ENCODE measurements at regions of chr10 and their contacts with region 1.

Region 1: DNA sequence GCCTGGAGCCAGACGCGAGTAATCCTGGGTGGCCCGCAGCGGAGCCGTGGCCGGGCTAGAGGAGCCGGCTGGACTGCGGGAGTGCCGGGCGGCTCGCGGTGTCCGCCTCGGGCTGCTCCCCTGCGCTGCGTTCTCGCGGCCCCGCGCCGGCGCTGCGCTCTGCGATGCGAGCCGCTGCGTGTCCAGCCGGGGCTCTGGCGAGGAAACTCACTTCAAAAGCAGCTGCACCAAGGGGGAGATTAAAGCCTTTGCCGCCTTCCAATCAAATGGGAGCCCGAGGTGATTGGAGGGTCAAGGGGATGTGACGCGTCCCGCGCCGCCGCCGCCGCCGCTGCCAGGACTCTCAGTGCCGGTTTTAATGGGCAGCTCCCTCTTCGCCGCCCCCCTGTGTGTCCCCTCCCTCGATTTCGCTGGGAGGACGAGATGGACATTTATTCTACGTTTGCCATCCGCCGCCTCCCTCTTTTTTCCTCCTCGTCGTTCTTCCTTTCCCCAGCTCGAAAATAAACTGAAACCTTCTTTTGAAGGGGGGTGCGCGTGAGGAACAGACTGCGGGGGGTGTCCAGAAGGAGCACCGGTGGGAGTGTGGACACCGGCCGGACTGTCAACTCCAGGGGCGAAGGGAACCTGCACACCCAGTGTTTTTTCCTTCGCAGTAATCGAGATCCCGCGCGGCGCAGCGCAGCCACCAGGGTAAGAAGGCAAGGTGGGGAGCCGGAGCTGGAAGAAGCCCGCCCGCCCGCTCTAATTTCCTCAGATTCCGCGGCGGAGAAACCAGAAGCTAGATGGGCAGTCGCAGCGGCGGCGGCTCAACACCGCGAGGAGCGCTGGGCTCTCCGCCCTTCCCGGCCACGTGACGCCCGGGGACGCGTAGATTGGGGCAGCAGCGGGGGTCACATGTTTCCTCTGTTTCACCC is at the start of gene ZNF503:
- DNase-seq: peak; percentile 97
- H3K4me3 ChIP-seq: peak within 1 kb of the TSS; percentile 66 to 81 (median 77)
- H3K27ac ChIP-seq: peak within 1 kb of the TSS; percentile 55
- H3K4me1 ChIP-seq: peaks cover 34% of the 10 kb centered on the region
- H3K27me3 ChIP-seq: peaks cover 19 to 55% of the 10 kb centered on the region in 2 experiments
- CTCF ChIP-seq: peak in 1 of 2 donors; percentile 22
- POLR2A ChIP-seq: peak; percentile 88
- total RNA-seq, gene ZNF503: 2.2 and 2.7 TPM in 2 replicates

Region 2: DNA sequence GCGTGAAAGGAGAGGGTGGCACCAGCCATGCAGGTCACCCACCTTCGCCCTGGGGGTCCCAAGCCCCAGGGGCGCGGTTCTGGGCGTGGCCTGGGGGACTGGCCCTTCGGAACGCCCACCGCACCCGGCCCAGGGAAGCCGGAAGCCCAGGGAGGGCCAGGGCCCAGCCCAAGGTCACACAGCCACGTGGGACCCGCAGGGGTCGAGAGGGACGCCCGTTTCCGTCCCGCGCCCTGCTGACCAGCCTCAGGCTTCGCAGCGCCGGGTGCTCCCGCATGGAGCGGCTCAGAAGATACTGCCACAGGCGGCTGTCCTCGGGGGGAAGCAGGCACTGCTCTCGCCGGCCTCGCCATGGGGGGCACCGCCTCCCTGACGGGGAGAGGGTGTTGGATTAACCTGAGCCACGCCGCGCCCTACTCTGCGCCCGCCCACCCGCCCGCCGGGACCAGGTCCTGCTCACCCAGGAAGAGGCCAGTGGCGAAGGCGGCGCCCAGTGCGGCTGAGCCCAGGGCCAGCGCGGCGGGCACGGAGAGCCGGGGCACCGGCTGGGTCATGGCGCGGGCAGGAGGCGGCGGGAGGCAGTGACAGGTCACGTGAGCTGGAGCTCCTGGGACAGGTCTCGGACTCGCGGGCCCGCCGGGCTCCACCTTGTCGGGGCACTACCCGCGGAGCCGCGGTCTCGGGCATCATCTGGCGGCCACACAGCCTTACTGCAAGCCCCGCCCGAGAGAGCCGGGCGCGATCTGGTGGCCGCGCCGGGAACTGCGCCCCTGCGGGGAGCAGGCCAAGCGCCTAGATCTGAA is 166.3 kb before region 1 on chr10 and contains the start of gene COMTD1:
- CTCF ChIA-PET with region 1: no interaction called
- POLR2A ChIA-PET with region 1: no interaction called
- dilution Hi-C with region 1: no loop called
- intact Hi-C with region 1: loop called (anchors 5 kb)
- DNase-seq: peak; percentile 83
- H3K4me3 ChIP-seq: peak within 1 kb of the TSS; percentile 22 to 60 (median 42)
- H3K27ac ChIP-seq: no peak within 1 kb of the TSS
- H3K4me1 ChIP-seq: peaks cover 11% of the 10 kb centered on the region
- H3K27me3 ChIP-seq: no peaks in the 10 kb centered on the region
- CTCF ChIP-seq: peak; percentile 100
- POLR2A ChIP-seq: no peak
- total RNA-seq, gene COMTD1: 14.0 and 18.6 TPM in 2 replicates

Region 3: GRCh38 chr10:75469006-75469616 is 67.3 kb after region 1 on chr10:
- CTCF ChIA-PET with region 1: no interaction called
- POLR2A ChIA-PET with region 1: no interaction called
- dilution Hi-C with region 1: no loop called
- intact Hi-C with region 1: loop called (anchors 5 kb)
- DNase-seq: peak; percentile 56
- H3K4me3 ChIP-seq: no peak overlapping the region
- H3K27ac ChIP-seq: no peak overlapping the region
- H3K4me1 ChIP-seq: peaks cover 7% of the 10 kb centered on the region
- H3K27me3 ChIP-seq: no peaks in the 10 kb centered on the region
- CTCF ChIP-seq: no peak
- POLR2A ChIP-seq: no peak

Region 4: GRCh38 chr10:75723319-75723980 is 321.6 kb after region 1 on chr10:
- CTCF ChIA-PET with region 1: no interaction called
- POLR2A ChIA-PET with region 1: no interaction called
- dilution Hi-C with region 1: no loop called
- intact Hi-C with region 1: loop called (anchors 2 kb)
- DNase-seq: peak; percentile 85
- H3K4me3 ChIP-seq: no peak overlapping the region
- H3K27ac ChIP-seq: peak overlapping the region; percentile 38
- H3K4me1 ChIP-seq: peaks cover 18% of the 10 kb centered on the region
- H3K27me3 ChIP-seq: no peaks in the 10 kb centered on the region
- CTCF ChIP-seq: no peak
- POLR2A ChIP-seq: no peak

Region 5: DNA sequence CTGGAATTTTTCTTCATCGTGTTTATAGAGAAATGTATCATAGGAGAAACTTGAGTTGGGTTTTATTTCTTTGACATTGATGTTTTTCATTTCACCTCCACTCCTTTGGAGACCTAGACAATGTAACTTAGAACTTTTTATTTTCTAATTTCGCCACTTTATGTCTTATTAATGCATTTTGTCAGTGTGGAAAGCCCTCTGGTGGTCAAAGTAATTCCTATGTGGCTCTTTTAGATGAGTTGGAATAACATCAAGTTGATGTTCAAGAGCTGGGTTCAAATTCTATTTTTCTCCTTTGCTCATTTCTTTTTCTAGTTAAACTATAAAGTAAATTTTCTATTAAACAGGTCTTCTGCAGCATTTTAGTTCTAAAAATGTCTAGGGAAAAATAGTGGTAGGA is 508.2 kb after region 1 on chr10:
- CTCF ChIA-PET with region 1: interaction called, 49 read pairs
- POLR2A ChIA-PET with region 1: no interaction called
- dilution Hi-C with region 1: no loop called
- intact Hi-C with region 1: loop called (anchors 1 kb)
- DNase-seq: peak; percentile 29
- H3K4me3 ChIP-seq: no peak overlapping the region
- H3K27ac ChIP-seq: no peak overlapping the region
- H3K4me1 ChIP-seq: no peaks in the 10 kb centered on the region
- H3K27me3 ChIP-seq: no peaks in the 10 kb centered on the region
- CTCF ChIP-seq: peak; percentile 14 to 16
- POLR2A ChIP-seq: no peak

Region 6: GRCh38 chr10:76303682-76304316 is 902.0 kb after region 1 on chr10:
- CTCF ChIA-PET with region 1: interaction called, 14 read pairs
- POLR2A ChIA-PET with region 1: no interaction called
- dilution Hi-C with region 1: no loop called
- intact Hi-C with region 1: loop called (anchors 1 kb)
- DNase-seq: peak; percentile 67
- H3K4me3 ChIP-seq: no peak overlapping the region
- H3K27ac ChIP-seq: no peak overlapping the region
- H3K4me1 ChIP-seq: no peaks in the 10 kb centered on the region
- H3K27me3 ChIP-seq: no peaks in the 10 kb centered on the region
- CTCF ChIP-seq: peak; percentile 38 to 61
- POLR2A ChIP-seq: no peak

Measured in endothelial cell of umbilical vein (primary cell).